Activated naive CD4-positive, alpha-beta T cell treated with anti-CD3 and anti-CD28 coated beads for 36 hours (primary cell): ENCODE measurements at regions of chr16 and their contacts with region 1.

Region 1: DNA sequence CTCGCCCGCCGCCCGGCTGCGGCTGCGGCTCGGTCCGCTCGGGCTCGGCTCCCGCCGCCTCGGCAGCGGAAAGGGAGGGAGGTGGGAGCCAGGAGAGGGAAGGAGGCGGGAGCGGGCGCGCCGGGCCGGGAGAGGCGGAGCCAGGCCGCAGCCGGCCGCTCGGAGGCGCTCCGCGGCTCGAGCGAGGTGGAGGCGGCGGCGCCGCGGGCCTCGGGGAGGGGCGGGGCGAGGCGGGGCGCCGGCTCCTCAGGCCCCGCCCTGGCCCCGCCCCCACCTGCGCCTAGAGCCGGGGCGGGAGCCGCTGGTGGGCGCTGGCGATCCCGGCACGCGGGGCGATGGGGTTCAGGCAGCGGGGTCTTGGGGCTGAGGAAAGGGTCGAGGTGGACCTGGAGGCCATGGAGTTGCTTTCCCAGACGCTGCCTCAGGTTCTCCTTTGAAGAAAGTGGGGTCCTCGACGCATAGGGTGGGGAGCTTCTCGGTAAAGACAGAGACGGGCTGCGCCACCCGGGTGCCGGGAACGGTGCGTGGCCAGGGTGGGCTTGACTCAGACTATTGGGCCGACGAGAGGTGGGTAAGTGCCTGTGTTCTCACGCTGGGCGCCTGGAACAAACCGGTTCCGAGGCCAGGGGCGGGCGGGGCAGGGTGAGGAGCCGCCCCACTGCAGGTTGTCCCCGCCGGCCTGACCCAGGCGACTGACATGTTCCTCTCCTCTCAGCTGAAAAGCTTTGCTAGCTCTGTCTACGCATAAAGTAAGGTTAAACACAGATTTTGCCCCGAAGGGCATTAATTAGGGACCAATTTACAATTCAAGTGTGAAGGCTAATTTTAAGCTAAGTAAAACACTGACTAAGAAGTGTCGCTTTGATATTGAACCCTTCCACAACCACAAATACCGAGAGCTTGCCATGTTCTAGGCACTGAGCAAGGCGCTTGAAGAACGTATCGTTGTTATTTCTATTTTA is at the start of gene CMTM4:
- DNase-seq: peak; percentile 78
- H3K4me3 Mint-ChIP-seq: peak within 1 kb of the TSS; percentile 76
- H3K27ac Mint-ChIP-seq: no peak within 1 kb of the TSS
- H3K4me1 Mint-ChIP-seq: peaks cover 4% of the 10 kb centered on the region
- H3K27me3 Mint-ChIP-seq: peaks cover 6% of the 10 kb centered on the region
- total RNA-seq, gene CMTM4: 4.6 to 4.7 TPM

Region 2: GRCh38 chr16:66668777-66669444 is 28.0 kb before region 1 on chr16:
- CTCF ChIA-PET with region 1: no interaction called
- intact Hi-C with region 1: no loop called
- DNase-seq: no peak
- H3K4me3 Mint-ChIP-seq: no peak overlapping the region
- H3K27ac Mint-ChIP-seq: no peak overlapping the region
- H3K4me1 Mint-ChIP-seq: no peaks in the 10 kb centered on the region
- H3K27me3 Mint-ChIP-seq: no peaks in the 10 kb centered on the region

Region 3: DNA sequence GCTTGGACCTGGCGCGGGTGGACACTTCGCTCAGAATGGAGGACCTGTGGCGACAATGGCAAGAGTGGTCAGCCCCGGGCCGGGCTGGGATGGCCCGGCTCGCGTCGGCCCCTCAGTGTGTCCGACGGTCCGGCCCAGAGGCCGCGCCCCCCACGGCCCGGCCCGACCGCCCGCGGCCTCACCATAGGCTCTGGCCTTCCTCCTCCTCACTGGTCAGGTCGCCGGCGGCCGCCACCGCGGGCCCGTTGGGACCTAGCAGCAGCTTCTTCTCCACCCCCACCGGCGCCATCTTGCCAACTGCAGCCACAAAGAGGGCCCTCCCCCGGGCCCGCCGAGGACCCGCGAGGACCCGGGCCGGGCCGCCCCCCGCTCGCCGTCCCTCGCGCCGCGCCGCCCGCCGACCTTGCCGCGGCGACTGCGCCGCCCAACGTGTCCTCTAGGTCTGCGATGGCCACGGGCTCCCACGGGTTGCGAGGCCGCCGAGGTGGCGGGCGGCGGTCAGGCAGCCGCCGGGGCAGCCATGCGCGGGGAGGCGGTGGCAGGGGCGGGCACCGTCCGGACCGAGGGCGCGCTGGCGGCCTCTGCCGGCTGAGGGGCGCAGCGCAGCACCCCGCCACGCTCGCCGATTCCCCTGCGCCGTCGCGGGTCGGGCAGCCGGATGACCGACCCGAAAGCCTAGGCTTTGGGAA is 54.5 kb after region 1 on chr16 and contains the start of gene DYNC1LI2:
- CTCF ChIA-PET with region 1: interaction called, 5 read pairs
- intact Hi-C with region 1: loop called (anchors 5 kb)
- DNase-seq: peak; percentile 82
- H3K4me3 Mint-ChIP-seq: peak within 1 kb of the TSS; percentile 88
- H3K27ac Mint-ChIP-seq: peak within 1 kb of the TSS; percentile 78
- H3K4me1 Mint-ChIP-seq: peaks cover 36% of the 10 kb centered on the region
- H3K27me3 Mint-ChIP-seq: peaks cover 3% of the 10 kb centered on the region
- total RNA-seq, gene DYNC1LI2: 30.8 to 31.0 TPM